CD14-positive monocyte (primary cell): ENCODE measurements at regions of chr12 and their contacts with region 1.

Region 1: GRCh38 chr12:52582971-52583456 is 9.4 kb upstream of the KRT74 start:
- DNase-seq: peak; percentile 3 to 20 (median 14)
- H3K4me3 ChIP-seq: no peak overlapping the region
- H3K4me3 Mint-ChIP-seq: no peak overlapping the region
- H3K27ac ChIP-seq: no peak overlapping the region
- H3K27ac Mint-ChIP-seq: no peak overlapping the region
- H3K4me1 ChIP-seq: no peaks in the 10 kb centered on the region
- H3K4me1 Mint-ChIP-seq: no peaks in the 10 kb centered on the region
- H3K27me3 ChIP-seq: no peaks in the 10 kb centered on the region
- H3K27me3 Mint-ChIP-seq: peaks cover 2 to 6% (median 5%) of the 10 kb centered on the region in 3 donors
- CTCF ChIP-seq: peak; percentile 46

Region 2: GRCh38 chr12:52543985-52544883 is 38.8 kb before region 1 on chr12:
- intact Hi-C with region 1: no loop called
- DNase-seq: no peak
- H3K4me3 ChIP-seq: no peak overlapping the region
- H3K4me3 Mint-ChIP-seq: no peak overlapping the region
- H3K27ac ChIP-seq: no peak overlapping the region
- H3K27ac Mint-ChIP-seq: no peak overlapping the region
- H3K4me1 ChIP-seq: no peaks in the 10 kb centered on the region
- H3K4me1 Mint-ChIP-seq: no peaks in the 10 kb centered on the region
- H3K27me3 ChIP-seq: no peaks in the 10 kb centered on the region
- H3K27me3 Mint-ChIP-seq: peaks cover 0 to 10% (median 6%) of the 10 kb centered on the region in 3 donors
- CTCF ChIP-seq: no peak

Region 3: DNA sequence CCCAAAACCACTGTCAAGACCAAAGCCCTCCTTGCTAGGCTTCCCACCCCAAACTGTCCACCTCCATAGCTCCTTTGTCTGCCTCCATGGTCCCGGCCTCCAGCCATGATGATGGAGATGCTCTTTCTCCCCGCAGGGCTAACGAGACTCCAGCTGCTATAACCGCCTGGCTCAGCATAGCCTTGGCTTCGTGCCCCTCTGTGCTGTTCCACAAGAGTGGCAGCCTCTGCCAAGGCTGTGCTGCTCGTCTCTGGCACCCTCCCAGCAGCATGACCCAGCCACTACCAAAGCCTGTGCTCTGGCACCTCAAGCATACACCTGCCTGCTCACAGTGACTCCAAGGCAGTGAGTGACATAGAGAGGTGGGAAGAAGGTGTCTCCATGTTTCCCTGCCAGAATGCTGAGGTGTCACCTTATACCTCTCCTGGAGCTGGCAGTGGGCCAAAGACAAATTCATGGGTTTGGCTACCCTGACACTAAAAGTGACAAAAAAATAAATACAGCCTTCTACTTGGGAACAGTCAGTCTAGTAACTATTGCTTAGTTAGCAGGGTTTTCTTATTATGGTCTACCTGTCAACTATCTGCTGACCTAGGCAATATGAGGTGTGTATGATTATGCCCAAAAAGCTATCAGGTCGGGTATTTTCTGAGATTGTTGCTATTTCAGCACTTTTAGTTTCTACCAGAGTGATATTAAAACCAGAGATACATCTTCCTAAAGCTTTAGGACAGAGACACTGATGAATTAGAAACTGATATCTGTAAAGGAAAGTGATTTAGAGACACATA is 51.4 kb after region 1 on chr12:
- intact Hi-C with region 1: no loop called
- DNase-seq: no peak
- H3K4me3 ChIP-seq: no peak overlapping the region
- H3K4me3 Mint-ChIP-seq: no peak overlapping the region
- H3K27ac ChIP-seq: no peak overlapping the region
- H3K27ac Mint-ChIP-seq: no peak overlapping the region
- H3K4me1 ChIP-seq: peaks cover 0 to 8% of the 10 kb centered on the region in 2 donors
- H3K4me1 Mint-ChIP-seq: peaks cover 8% of the 10 kb centered on the region
- H3K27me3 ChIP-seq: no peaks in the 10 kb centered on the region
- H3K27me3 Mint-ChIP-seq: peaks cover 0 to 7% (median 4%) of the 10 kb centered on the region in 3 donors
- CTCF ChIP-seq: no peak

Region 4: GRCh38 chr12:52720437-52720836 is 137.4 kb after region 1 on chr12:
- intact Hi-C with region 1: no loop called
- DNase-seq: no peak
- H3K4me3 ChIP-seq: no peak overlapping the region
- H3K4me3 Mint-ChIP-seq: no peak overlapping the region
- H3K27ac ChIP-seq: no peak overlapping the region
- H3K27ac Mint-ChIP-seq: no peak overlapping the region
- H3K4me1 ChIP-seq: no peaks in the 10 kb centered on the region
- H3K4me1 Mint-ChIP-seq: peaks cover 5% of the 10 kb centered on the region
- H3K27me3 ChIP-seq: peaks cover 10 to 14% of the 10 kb centered on the region in 2 donors
- H3K27me3 Mint-ChIP-seq: peaks cover 10 to 24% (median 19%) of the 10 kb centered on the region in 3 donors
- CTCF ChIP-seq: no peak

Region 5: DNA sequence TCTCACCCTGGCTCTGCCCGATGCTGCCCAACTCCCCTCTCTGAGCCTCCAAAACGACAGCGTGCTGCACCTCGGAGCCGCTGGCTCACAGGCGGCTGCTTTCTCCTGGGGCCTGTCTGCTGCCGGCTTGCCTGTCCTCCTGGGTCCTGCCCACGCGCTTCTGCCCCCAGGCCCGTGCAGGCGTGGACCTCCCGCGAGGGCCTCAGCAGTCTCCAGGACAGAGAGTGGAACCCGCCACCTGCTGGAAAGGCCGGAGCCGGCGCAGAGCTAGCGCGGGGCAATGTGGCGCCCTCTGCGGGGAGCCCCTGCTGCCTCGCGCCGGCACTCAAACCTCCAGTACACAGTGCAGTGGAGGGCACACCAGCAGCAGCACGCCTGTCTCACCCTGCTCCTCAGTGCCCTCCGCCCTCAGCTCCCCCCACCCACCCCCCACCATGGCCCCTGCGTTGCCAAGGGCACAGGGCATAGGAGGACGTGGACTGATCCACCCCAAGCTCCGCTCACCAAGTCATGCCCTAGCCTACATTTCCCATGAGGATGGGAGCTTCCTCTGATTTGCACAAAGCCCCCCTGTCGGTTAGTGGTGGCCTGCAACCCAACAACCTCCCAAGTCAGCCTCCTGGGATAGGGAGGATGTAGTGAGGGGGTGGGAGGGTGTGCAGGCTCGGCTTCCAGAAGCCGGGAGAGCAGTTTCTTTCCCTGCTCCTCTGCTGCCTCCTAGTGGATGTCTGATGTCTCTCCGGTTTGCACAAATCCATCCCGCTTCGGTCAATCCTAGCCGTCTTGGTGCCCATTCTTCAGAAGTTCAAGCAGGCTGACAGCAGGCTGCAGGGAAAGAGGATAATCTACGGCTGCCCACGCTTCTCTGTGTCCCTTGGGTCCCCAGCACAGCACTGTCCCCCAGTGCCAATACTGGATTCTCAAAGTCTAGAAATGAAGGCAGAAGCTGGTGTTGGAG is 296.7 kb after region 1 on chr12:
- intact Hi-C with region 1: loop called in 1 of 2 experiments (anchors 5 kb)
- DNase-seq: peak; percentile 65 to 78 (median 71)
- H3K4me3 ChIP-seq: peak overlapping the region; percentile 11 to 72 (median 30)
- H3K4me3 Mint-ChIP-seq: peak overlapping the region; percentile 73 to 90
- H3K27ac ChIP-seq: no peak overlapping the region
- H3K27ac Mint-ChIP-seq: peak overlapping the region in 2 of 7 donors; percentile 55 to 68
- H3K4me1 ChIP-seq: peaks cover 13 to 27% of the 10 kb centered on the region in 2 donors
- H3K4me1 Mint-ChIP-seq: peaks cover 23% of the 10 kb centered on the region
- H3K27me3 ChIP-seq: no peaks in the 10 kb centered on the region
- H3K27me3 Mint-ChIP-seq: peaks cover 2 to 15% (median 8%) of the 10 kb centered on the region in 3 donors
- CTCF ChIP-seq: peak; percentile 98